ENCODE measurements at regions of chr6 and their contacts with region 1.

Region 1: DNA sequence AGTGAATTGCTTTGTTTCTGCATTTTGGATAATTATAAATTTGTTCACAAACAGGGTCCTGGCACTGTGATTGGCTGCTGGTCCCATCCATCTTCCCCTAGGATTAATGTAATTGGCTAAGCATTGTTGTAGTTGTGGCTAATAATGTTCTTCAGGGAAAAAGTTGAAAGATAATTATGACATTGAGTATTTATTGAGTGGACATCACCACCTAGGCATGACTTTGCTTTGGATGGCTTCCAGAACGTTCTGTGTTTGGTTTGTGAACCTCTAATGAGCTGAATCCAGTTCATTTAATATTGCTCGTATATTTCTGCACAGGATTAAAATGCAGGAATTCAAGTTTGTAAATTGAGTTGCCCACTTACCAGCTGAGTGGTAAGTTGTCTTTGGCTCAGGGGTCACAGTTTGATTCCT is 55.1 kb downstream of the ARID1B start:
- DNase-seq: peak in 2 of 6 donors; percentile 35 to 53
- ATAC-seq: peak; percentile 42 to 73 (median 53)
- H3K4me3 ChIP-seq: no peak overlapping the region
- H3K27ac ChIP-seq: peak overlapping the region in 1 of 4 donors; percentile 24
- H3K4me1 ChIP-seq: peaks cover 15 to 25% (median 23%) of the 10 kb centered on the region in 3 donors
- H3K27me3 ChIP-seq: no peaks in the 10 kb centered on the region
- CTCF ChIP-seq: no peak

Region 2: GRCh38 chr6:156703719-156704118 is 128.5 kb before region 1 on chr6:
- intact Hi-C with region 1: no loop called
- DNase-seq: no peak
- ATAC-seq: no peak
- H3K4me3 ChIP-seq: no peak overlapping the region
- H3K27ac ChIP-seq: no peak overlapping the region
- H3K4me1 ChIP-seq: peaks cover 13 to 26% (median 13%) of the 10 kb centered on the region in 3 donors
- H3K27me3 ChIP-seq: no peaks in the 10 kb centered on the region
- CTCF ChIP-seq: no peak

Region 3: GRCh38 chr6:156949376-156949775 is 117.1 kb after region 1 on chr6:
- intact Hi-C with region 1: loop called in 1 of 3 experiments (anchors 10 kb)
- DNase-seq: no peak
- ATAC-seq: peak in 3 of 4 donors; percentile 48 to 77 (median 57)
- H3K4me3 ChIP-seq: no peak overlapping the region
- H3K27ac ChIP-seq: peak overlapping the region in 1 of 4 donors; percentile 13
- H3K4me1 ChIP-seq: peaks cover 7 to 30% (median 21%) of the 10 kb centered on the region in 3 donors
- H3K27me3 ChIP-seq: no peaks in the 10 kb centered on the region
- CTCF ChIP-seq: no peak

Measured in pancreas (tissue), 10 donors.